Endothelial cell of umbilical vein (primary cell): ENCODE measurements at regions of chr17 and their contacts with region 1.

Region 1: DNA sequence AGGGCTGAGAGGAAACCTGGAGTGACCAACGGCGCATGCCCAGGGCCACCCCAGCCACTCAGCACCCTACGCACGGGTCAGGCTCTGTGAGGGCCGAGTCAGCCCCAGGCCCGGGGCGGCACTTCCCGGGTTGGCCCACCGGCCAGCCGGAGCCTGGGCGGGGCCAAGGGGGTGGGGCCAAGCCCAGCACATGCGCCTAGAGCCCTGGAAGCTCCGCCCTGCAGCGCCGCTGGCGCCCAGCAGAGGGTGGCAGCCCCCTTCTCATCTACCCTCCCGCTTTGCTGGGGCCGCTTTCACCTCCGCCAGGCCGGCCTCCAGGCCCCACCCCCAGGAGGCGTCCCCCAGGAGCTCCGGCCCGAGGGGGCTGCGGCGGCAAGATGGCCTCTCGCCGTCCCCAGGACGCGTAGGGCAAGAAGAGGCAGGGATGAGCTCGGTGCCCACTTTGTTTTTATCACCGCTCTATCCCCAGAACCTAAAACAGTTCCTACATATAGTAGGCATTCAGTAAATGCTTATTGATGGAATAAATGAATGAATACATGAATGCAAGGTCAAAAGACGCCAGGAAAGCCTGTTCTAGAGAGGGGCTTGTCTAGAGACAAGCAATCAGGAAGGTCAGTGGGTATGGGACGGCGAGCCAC is 31.3 kb downstream of the MYO18A start:
- DNase-seq: peak; percentile 95
- H3K4me3 ChIP-seq: peak overlapping the region; percentile 28 to 74 (median 31)
- H3K27ac ChIP-seq: peak overlapping the region; percentile 53
- H3K4me1 ChIP-seq: peaks cover 18% of the 10 kb centered on the region
- H3K27me3 ChIP-seq: no peaks in the 10 kb centered on the region
- CTCF ChIP-seq: peak; percentile 96 to 97
- POLR2A ChIP-seq: peak; percentile 83

Region 2: GRCh38 chr17:28405632-28406472 is 743.1 kb before region 1 on chr17 and contains the start of gene SLC46A1:
- CTCF ChIA-PET with region 1: no interaction called
- POLR2A ChIA-PET with region 1: no interaction called
- dilution Hi-C with region 1: no loop called
- intact Hi-C with region 1: no loop called
- DNase-seq: peak; percentile 24
- H3K4me3 ChIP-seq: peak within 1 kb of the TSS; percentile 0 to 54 (median 7)
- H3K27ac ChIP-seq: no peak within 1 kb of the TSS
- H3K4me1 ChIP-seq: peaks cover 9% of the 10 kb centered on the region
- H3K27me3 ChIP-seq: peaks cover under 1 to 2% of the 10 kb centered on the region in 2 experiments
- CTCF ChIP-seq: no peak
- POLR2A ChIP-seq: no peak
- total RNA-seq, gene SLC46A1: 1.8 and 4.1 TPM in 2 replicates

Region 3: DNA sequence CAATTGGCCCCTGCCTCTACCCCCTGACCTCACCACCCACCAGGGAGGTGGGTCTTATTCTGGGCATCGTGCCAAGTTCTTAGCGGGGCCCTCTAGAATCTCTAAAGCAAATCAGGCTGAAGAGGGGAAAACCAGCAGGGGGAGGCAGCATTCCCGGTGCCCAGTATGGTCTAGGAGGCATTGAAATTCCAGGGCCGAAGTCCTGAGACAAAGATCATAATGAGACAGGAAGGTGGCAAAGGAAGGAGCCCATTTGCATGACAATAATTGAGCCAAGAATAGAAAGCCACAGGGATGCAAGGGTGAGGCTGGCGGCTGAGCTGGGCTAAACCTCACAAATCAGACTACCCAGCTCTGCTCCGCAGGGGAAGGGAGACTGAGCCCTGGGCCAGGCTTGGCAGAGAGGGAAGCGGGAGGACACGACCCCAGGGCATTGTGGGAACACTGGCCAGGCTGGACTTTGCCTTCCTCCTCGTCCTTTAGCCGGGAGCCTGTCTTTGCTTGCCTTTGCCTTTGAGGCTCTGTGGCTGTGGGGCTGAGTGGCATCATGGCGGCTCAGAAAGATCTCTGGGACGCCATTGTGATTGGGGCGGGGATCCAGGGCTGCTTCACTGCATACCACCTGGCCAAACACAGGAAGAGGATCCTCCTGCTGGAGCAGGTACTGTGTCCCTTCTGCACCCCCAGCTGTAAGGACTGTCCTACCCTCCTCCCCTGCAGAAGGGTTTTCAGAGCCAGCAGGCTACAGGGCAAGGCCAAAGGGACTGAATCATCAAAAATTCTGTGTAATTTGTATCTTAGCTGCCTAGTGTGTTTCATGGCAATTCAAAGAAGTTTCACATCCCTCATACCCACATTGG is 106.0 kb before region 1 on chr17 and contains the start of gene PIPOX:
- CTCF ChIA-PET with region 1: no interaction called
- POLR2A ChIA-PET with region 1: no interaction called
- dilution Hi-C with region 1: no loop called
- intact Hi-C with region 1: no loop called
- DNase-seq: peak; percentile 54
- H3K4me3 ChIP-seq: no peak within 1 kb of the TSS
- H3K27ac ChIP-seq: no peak within 1 kb of the TSS
- H3K4me1 ChIP-seq: peaks cover 7% of the 10 kb centered on the region
- H3K27me3 ChIP-seq: peaks cover 20% of the 10 kb centered on the region in 2 experiments
- CTCF ChIP-seq: peak; percentile 4 to 33
- POLR2A ChIP-seq: no peak
- total RNA-seq, gene PIPOX: 2.2 and 2.5 TPM in 2 replicates

Region 4: DNA sequence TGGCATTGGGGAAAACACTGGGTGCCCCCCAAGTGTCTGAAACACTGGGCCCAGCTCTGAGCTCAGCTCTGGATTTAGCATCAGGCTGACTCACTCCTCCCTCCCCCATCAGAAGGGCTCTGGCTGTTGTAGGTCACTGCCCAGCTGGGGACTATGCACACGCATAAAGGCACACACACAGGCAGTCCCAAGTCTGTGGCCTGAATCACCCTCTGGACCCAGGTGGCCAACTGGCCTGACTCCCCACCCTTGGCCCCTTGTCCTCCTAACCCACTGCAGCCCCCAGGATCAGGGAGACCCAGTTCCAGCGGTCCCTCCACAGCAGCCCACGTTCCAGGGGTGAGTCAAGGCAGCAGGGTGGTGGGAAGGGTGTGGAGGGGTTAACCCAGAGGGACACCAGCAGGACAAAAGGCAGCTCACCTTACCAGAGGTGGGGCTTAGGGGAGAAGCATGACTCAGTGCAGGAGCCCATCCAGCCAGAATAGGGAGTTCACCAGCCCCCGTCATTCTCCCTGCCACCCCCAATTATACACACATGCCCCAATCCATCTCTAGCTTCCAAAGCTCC is 15.7 kb before region 1 on chr17:
- CTCF ChIA-PET with region 1: interaction called, 17 read pairs
- POLR2A ChIA-PET with region 1: no interaction called
- dilution Hi-C with region 1: no loop called
- intact Hi-C with region 1: no loop called
- DNase-seq: no peak
- H3K4me3 ChIP-seq: no peak overlapping the region
- H3K27ac ChIP-seq: no peak overlapping the region
- H3K4me1 ChIP-seq: no peaks in the 10 kb centered on the region
- H3K27me3 ChIP-seq: no peaks in the 10 kb centered on the region
- CTCF ChIP-seq: no peak
- POLR2A ChIP-seq: no peak

Region 5: DNA sequence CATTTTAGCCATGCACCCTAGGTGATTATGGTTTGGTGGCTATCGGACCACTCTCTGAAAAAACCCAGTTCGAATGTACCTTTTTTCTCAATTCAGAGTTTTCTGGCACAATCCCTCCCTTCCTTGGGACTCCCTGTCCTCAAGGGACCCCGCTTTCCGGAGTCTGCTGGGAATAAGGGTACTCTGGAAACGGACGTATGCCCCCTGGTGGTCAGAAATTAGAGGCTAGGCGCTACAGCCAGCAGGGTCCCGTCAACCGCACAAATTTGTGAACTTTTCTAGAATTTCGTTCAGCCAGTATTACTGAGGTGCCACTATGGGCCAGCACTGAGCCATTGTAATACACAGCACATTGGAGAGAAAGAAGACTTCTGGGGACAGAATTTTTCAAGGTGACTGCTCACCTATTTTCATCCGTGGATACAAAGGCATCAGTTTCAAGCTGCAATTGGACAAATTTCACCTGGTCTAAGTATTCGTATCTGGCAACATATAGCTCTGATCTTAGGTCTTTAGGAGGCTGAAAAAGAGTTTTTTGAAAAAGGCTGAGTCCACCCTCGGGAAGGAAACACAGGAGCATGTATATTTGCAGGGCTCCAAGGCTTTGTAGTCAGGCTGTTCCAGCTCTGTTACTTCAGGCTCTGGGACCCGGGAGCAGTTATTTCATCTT is 70.6 kb after region 1 on chr17:
- CTCF ChIA-PET with region 1: interaction called, 320 read pairs
- POLR2A ChIA-PET with region 1: interaction called, 3 read pairs
- dilution Hi-C with region 1: no loop called
- intact Hi-C with region 1: loop called (anchors 1 kb)
- DNase-seq: peak; percentile 86
- H3K4me3 ChIP-seq: no peak overlapping the region
- H3K27ac ChIP-seq: no peak overlapping the region
- H3K4me1 ChIP-seq: no peaks in the 10 kb centered on the region
- H3K27me3 ChIP-seq: no peaks in the 10 kb centered on the region
- CTCF ChIP-seq: peak; percentile 86 to 94
- POLR2A ChIP-seq: no peak

Region 6: DNA sequence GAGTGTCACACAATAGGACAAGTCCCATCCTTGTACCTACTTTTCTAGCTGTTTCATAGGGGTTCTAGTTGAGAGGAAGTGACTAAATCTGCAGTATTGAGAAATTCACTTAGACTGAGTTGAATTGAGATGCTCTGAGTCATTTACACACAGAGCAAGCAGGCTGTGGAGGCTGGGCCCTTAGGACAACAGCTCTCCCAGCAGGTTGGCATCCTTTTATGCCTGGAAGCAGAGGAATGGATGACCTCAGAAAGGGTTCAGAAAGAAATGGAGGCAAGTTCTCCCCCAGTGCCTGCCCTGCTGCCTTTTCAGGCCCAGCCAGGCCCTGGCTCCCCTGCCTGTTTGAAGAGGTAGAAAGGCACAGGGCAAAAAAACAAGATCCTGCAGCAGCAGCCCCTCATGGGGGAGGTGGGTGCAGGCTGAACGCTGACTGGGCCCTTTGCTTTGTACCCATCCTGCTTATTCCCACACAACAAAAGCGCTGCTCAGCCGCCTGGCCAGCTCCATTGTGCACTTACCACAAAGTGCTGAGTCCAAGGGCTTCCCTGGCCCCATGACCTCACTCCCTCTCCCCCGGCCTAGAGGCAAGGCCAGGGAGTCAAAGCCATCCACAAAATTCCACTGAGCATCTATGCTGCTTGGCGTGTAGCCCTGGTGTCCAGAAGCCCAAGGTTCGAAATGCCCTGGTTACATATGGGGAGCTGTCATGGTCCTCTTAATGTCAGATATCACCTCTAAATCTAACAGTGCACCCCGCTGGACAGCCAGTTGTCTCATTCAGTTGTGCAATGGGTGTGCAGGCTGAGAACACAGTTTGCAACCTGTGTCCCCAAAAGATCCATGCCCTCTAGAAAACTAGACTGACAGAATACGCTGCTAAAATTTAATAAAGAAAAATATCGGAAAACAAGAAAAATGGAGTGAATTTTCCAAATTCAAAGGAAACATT is 92.4 kb after region 1 on chr17:
- CTCF ChIA-PET with region 1: interaction called, 12 read pairs
- POLR2A ChIA-PET with region 1: no interaction called
- dilution Hi-C with region 1: no loop called
- intact Hi-C with region 1: no loop called
- DNase-seq: peak; percentile 82
- H3K4me3 ChIP-seq: no peak overlapping the region
- H3K27ac ChIP-seq: peak overlapping the region; percentile 41
- H3K4me1 ChIP-seq: peaks cover 12% of the 10 kb centered on the region
- H3K27me3 ChIP-seq: no peaks in the 10 kb centered on the region
- CTCF ChIP-seq: no peak
- POLR2A ChIP-seq: no peak

Region 7: GRCh38 chr17:29303386-29303785 is 154.5 kb after region 1 on chr17:
- CTCF ChIA-PET with region 1: no interaction called
- POLR2A ChIA-PET with region 1: no interaction called
- dilution Hi-C with region 1: no loop called
- intact Hi-C with region 1: no loop called
- DNase-seq: no peak
- H3K4me3 ChIP-seq: no peak overlapping the region
- H3K27ac ChIP-seq: no peak overlapping the region
- H3K4me1 ChIP-seq: no peaks in the 10 kb centered on the region
- H3K27me3 ChIP-seq: no peaks in the 10 kb centered on the region
- CTCF ChIP-seq: no peak
- POLR2A ChIP-seq: no peak

Region 8: DNA sequence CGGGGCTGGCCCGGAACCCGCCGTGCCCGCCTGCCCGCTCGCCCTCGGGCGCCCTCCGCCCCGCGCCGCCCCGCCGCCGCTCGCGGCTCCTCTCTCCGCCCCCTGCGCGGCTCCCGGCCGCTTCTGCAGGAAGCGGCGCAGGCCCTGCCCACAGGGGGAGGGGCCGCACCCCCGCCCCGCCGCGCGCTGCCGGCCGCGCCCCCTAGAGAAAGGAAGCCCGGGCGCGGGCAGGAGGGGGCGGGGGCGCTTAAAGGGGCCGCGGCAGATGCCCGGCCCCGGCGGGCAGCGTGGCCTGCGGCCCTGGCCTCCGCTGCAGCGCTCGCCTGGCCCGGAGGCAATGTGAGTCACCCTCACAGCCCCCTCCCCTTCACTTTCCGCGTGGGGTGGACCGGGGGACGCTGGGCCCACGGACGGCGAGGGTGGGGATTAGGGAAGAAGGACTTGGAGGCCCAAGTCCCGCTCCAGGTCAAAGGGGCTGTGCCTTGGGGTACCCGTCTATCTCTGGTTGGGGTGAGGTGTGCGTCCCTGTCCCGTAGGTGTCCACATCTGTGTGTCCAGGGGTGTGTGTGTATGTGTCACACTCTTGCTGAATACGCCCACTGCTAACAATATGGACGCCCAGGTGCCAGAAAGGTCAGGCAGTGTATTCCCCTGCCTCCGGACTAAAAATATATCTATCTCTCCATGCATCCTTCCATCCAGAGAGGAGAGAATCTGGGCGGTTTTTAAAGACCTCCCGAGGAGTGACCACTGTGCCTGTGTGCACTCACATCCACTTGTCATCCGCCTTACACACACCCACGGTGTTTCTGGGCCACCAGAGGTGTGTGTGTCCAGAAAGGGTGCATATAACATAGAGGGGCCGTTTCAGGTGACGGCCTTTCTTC is 440.9 kb after region 1 on chr17 and contains the start of gene GIT1:
- CTCF ChIA-PET with region 1: interaction called, 3 read pairs
- POLR2A ChIA-PET with region 1: no interaction called
- dilution Hi-C with region 1: no loop called
- intact Hi-C with region 1: loop called (anchors 2 kb)
- DNase-seq: peak; percentile 82
- H3K4me3 ChIP-seq: peak within 1 kb of the TSS; percentile 58 to 69 (median 68)
- H3K27ac ChIP-seq: peak within 1 kb of the TSS; percentile 66
- H3K4me1 ChIP-seq: peaks cover 76% of the 10 kb centered on the region
- H3K27me3 ChIP-seq: no peaks in the 10 kb centered on the region
- CTCF ChIP-seq: no peak
- POLR2A ChIP-seq: peak; percentile 75
- total RNA-seq, gene GIT1: 82.0 and 92.5 TPM in 2 replicates